ENCODE measurements at regions of chr16 and their contacts with region 1.

Region 1: DNA sequence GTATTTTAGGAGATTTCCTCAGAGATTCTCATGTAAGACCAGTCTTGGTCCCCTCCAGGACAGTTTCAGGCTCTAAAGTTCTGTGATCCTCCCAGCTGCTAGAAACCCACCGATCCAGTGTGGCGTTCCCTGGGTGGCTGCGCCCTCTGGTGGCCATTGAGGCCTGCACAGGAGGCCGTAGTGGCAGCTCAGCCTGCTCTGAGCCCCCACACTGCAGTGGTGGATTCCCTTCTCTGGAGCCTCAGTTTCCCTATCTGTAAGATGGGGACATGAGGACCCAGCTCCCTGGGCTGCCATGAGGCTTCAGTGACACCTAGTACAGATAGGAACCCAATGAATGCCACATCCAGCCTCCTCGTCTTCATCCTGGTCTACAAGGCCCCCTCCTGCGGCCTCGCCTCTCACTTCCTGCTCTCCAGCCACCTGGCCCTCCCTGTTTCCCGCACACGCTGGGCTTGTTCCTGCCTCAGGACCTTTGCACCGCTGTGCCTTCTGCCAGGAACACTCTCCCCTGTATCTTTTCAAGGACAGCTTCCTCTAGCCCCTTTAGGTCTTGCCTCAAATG is 16.5 kb downstream of the CCDC102A start:
- DNase-seq: peak; percentile 68
- ATAC-seq: peak; percentile 80
- H3K4me3 Mint-ChIP-seq: no peak overlapping the region
- H3K27ac Mint-ChIP-seq: no peak overlapping the region
- H3K4me1 Mint-ChIP-seq: peaks cover 40% of the 10 kb centered on the region
- H3K27me3 Mint-ChIP-seq: no peaks in the 10 kb centered on the region
- CTCF ChIP-seq: peak; percentile 96

Region 2: DNA sequence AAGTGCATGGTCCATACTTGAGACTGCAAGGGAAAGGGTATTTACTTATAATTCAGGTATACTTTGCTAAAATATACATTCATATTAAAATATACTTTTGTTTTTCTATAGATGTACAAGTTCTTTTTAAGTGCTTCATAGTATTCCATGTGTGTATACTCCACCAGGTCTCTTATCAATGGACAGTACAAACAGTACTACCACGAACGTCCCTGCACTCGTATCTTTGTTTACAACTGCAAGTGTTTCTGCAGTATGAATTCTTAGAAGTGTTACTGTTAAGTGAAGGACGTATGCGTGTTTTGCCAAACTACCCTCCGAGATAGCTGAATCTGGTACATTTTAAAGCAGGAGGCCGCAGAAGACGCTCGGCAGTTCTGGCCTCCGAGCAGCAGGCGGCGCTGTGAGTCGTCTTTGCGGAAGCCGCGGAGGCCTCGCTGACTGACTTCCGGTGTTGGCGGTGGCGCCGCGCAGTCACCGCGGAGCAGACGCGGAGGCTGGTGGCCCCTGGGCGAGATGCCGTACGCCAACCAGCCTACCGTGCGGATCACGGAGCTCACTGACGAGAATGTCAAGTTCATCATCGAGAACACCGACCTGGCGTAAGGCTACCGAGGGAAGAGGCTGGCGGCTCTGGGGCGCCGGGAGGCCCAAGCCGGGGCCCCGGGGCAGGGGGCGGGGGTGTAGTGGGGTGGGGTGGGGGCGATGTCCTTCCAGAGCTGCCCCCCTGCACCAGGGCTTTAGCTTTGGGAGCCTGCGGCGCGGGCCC is 57.5 kb before region 1 on chr16 and contains the start of gene POLR2C:
- CTCF ChIA-PET with region 1: interaction called, 9 read pairs
- POLR2A ChIA-PET with region 1: interaction called, 5 read pairs
- intact Hi-C with region 1: loop called (anchors 1 kb)
- DNase-seq: peak; percentile 93
- ATAC-seq: peak; percentile 97
- H3K4me3 Mint-ChIP-seq: peak within 1 kb of the TSS; percentile 100
- H3K27ac Mint-ChIP-seq: peak within 1 kb of the TSS; percentile 99
- H3K4me1 Mint-ChIP-seq: peaks cover 29% of the 10 kb centered on the region
- H3K27me3 Mint-ChIP-seq: no peaks in the 10 kb centered on the region
- CTCF ChIP-seq: peak; percentile 38
- total RNA-seq, gene POLR2C: 52.2 and 56.6 TPM in 2 replicates

Region 3: GRCh38 chr16:57475711-57476339 is 44.1 kb before region 1 on chr16:
- CTCF ChIA-PET with region 1: interaction called, 8 read pairs
- POLR2A ChIA-PET with region 1: no interaction called
- intact Hi-C with region 1: loop called (anchors 1 kb)
- DNase-seq: peak; percentile 69
- ATAC-seq: peak; percentile 92
- H3K4me3 Mint-ChIP-seq: no peak overlapping the region
- H3K27ac Mint-ChIP-seq: no peak overlapping the region
- H3K4me1 Mint-ChIP-seq: peaks cover 40% of the 10 kb centered on the region
- H3K27me3 Mint-ChIP-seq: peaks cover 7% of the 10 kb centered on the region
- CTCF ChIP-seq: peak; percentile 51

Region 4: DNA sequence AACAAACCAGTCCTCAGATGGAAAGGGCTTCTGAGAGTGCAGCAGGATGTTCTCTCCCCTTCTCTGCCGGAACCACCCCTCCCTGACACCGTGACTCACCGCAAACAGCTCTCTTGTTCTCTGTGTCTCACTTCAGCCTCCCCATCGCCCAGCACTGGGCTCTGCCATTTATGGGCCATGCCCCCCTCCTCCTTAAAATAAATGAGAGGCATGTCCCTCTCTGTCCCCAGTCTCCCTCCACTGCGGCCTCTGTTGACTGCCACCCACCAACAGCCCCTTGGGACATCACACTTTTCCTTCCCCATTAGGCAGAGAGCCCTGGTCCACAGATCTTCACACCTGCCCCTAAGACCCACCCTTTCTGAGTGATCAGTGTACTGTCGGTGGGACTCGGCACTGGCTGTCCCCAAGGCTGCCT is 10.2 kb after region 1 on chr16:
- CTCF ChIA-PET with region 1: interaction called, 20 read pairs
- POLR2A ChIA-PET with region 1: interaction called, 8 read pairs
- intact Hi-C with region 1: loop called (anchors 1 kb)
- DNase-seq: no peak
- ATAC-seq: peak; percentile 82
- H3K4me3 Mint-ChIP-seq: peak overlapping the region; percentile 67
- H3K27ac Mint-ChIP-seq: peak overlapping the region; percentile 86
- H3K4me1 Mint-ChIP-seq: peaks cover 69% of the 10 kb centered on the region
- H3K27me3 Mint-ChIP-seq: no peaks in the 10 kb centered on the region
- CTCF ChIP-seq: no peak

Region 5: GRCh38 chr16:57544119-57544653 is 24.3 kb after region 1 on chr16:
- CTCF ChIA-PET with region 1: interaction called, 14 read pairs
- POLR2A ChIA-PET with region 1: interaction called, 9 read pairs
- intact Hi-C with region 1: loop called (anchors 1 kb)
- DNase-seq: peak; percentile 64
- ATAC-seq: peak; percentile 79
- H3K4me3 Mint-ChIP-seq: peak overlapping the region; percentile 88
- H3K27ac Mint-ChIP-seq: peak overlapping the region; percentile 79
- H3K4me1 Mint-ChIP-seq: peaks cover 87% of the 10 kb centered on the region
- H3K27me3 Mint-ChIP-seq: no peaks in the 10 kb centered on the region
- CTCF ChIP-seq: no peak

Region 6: DNA sequence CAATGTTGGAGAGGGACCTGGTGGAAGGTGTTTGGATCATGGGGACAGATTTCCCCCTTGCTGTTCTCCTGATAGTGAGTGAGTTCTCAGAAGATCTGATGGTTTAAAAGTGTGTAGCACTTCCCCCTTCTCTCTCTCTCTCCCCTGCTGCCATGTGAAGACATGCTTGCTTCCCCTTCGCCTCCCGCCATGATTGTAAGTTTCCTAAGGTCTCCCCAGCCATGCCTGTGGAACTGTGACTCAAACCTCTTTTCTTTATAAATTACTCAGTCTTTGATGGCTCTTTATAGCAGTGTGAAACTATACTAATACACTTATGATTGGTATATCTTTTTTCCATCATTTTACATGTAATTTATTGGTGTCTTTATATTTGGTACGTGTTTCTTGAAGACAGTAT is 36.0 kb after region 1 on chr16:
- CTCF ChIA-PET with region 1: interaction called, 6 read pairs
- POLR2A ChIA-PET with region 1: no interaction called
- intact Hi-C with region 1: loop called (anchors 5 kb)
- DNase-seq: no peak
- ATAC-seq: no peak
- H3K4me3 Mint-ChIP-seq: no peak overlapping the region
- H3K27ac Mint-ChIP-seq: peak overlapping the region; percentile 43
- H3K4me1 Mint-ChIP-seq: peaks cover 68% of the 10 kb centered on the region
- H3K27me3 Mint-ChIP-seq: no peaks in the 10 kb centered on the region
- CTCF ChIP-seq: no peak

Measured in activated B cell treated with CpG ODN at 0.5 μM for 24 hours (primary cell).